ENCODE measurements at regions of chr9 and their contacts with region 1.

Region 1: GRCh38 chr9:91036826-91037510 is 235.3 kb downstream of the SYK start:
- DNase-seq: peak; percentile 87
- ATAC-seq: peak; percentile 89
- H3K4me3 Mint-ChIP-seq: peak overlapping the region; percentile 19
- H3K27ac Mint-ChIP-seq: peak overlapping the region; percentile 86
- H3K4me1 Mint-ChIP-seq: peaks cover 52% of the 10 kb centered on the region
- H3K27me3 Mint-ChIP-seq: peaks cover 9% of the 10 kb centered on the region

Region 2: GRCh38 chr9:91253488-91253887 is 216.5 kb after region 1 on chr9:
- CTCF ChIA-PET with region 1: interaction called, 10 read pairs
- POLR2A ChIA-PET with region 1: no interaction called
- intact Hi-C with region 1: loop called in 1 of 2 experiments (anchors 5 kb)
- DNase-seq: peak; percentile 38
- ATAC-seq: peak; percentile 87
- H3K4me3 Mint-ChIP-seq: no peak overlapping the region
- H3K27ac Mint-ChIP-seq: no peak overlapping the region
- H3K4me1 Mint-ChIP-seq: peaks cover 22% of the 10 kb centered on the region
- H3K27me3 Mint-ChIP-seq: no peaks in the 10 kb centered on the region

Region 3: DNA sequence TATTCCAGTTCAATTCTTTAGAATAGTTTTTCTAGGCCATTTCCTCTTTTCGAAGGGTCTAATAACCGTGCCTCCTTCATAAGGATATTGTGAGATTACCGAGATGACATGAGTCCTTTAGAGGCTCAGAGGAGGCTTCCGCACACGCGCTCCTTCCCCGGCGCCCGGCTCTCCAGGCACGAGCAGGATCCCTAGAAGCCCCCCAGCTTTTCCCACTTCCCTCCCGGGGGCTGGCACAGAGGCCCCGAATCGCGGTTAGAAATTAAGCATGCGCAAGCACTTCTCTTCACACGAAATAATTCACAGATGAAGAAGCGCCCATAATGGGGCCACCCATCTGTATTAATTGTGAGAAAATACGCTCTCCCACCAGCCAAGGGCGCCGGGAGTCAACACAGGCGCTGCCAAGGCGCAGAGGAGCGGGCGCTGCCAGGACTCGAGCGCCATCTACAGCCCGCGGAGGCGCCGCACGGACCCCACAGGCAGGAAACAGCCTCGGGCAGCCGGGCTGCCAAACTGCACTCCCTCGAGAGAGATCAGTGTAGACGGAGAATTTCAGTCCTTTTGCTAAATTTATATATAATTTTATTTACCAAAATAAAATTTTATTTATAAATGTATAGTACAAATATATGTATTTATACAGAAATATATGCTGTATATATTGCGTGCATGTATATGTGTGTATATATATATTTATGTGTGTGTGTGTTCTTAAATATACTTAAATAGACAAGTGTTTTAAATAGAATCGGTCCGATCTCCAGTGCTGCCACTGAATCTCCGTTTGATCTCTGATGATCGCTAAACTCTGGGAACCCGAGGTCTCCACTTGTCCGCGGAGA is 644.7 kb after region 1 on chr9:
- CTCF ChIA-PET with region 1: no interaction called
- POLR2A ChIA-PET with region 1: no interaction called
- intact Hi-C with region 1: loop called (anchors 5 kb)
- DNase-seq: peak; percentile 88
- ATAC-seq: peak; percentile 96
- H3K4me3 Mint-ChIP-seq: no peak overlapping the region
- H3K27ac Mint-ChIP-seq: no peak overlapping the region
- H3K4me1 Mint-ChIP-seq: no peaks in the 10 kb centered on the region
- H3K27me3 Mint-ChIP-seq: peaks cover 14% of the 10 kb centered on the region

Region 4: DNA sequence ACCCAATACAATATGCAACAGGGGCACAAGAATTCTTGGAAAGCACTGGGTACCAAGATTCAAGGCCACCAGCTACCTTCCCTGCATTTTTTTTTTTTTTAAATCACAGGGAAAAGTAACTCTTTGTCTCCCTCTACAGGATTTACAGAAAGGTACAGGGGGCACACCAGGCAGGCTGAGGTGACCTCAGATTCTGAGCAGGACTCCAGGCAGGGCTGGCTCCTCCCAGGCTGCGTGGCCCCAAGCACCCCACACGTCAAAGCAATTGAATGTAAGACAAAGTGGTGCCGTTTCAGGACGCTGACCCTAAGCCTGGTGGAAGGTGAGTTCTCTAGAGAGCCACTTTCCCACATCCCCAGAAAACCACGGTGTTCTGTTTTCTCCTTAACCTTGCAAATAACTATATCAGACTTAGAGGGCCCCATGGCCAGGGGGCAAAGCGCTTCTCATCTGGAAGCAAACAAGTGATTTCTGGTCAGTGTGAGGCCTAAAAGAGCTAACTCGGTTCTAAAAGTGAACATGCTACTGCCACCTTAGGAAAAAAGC is 690.4 kb after region 1 on chr9:
- CTCF ChIA-PET with region 1: interaction called, 5 read pairs
- POLR2A ChIA-PET with region 1: no interaction called
- intact Hi-C with region 1: loop called (anchors 5 to 10 kb)
- DNase-seq: peak; percentile 64
- ATAC-seq: peak; percentile 96
- H3K4me3 Mint-ChIP-seq: no peak overlapping the region
- H3K27ac Mint-ChIP-seq: no peak overlapping the region
- H3K4me1 Mint-ChIP-seq: no peaks in the 10 kb centered on the region
- H3K27me3 Mint-ChIP-seq: peaks cover 3% of the 10 kb centered on the region

Measured in activated CD4-positive, alpha-beta T cell treated with anti-CD3 and anti-CD28 coated beads for 36 hours (primary cell).